ENCODE measurements at regions of chr1 and their contacts with region 1.

Region 1: DNA sequence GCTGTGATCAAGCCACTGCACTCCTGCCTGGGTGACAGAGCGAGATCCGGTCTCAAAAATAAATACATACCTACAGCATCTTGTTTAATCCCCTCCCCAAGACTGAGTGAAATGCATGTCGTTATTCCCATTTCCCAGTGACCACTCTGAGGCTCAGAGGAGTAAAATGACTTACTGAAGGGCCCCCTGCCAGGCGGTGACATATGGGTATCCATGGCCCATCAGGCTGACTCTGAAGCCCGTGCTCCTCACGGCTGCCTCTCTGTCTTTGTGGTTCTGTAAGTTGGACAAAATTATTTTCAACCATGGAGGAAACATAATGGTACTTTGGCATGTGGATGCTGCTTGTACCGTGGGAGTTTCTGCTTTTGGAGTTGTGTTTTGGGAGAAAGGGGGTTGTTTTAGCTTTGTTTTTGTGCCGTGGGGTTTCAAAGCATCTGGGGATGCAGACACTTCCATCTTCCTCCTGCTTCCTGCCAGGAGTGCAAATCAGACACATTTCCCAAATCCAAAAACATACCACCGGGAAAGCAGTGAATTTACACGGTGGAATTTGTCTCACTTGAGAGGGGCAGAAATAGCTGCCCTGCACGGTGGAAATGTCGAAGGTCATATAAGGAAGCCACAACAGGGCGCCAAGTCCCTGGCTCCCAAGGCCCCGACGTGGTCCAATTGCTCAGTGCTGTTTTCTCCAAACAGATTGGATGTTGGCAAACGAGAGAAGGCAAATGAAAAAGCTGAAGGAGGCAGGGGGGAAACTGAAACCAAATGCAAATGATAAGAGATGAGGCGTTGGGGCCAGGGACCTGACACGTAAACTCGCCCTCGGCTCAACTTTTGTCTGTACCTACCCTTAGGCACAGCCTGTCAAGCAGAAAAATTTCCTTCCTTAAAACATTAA is 17.1 kb upstream of the PINK1 start:
- DNase-seq: no peak
- H3K4me3 ChIP-seq: 0 out of 2 replicates have a peak overlapping the region, but pooled peaks have one; percentile 13
- H3K27ac ChIP-seq: peak overlapping the region; percentile 47
- H3K27me3 ChIP-seq: no peaks in the 10 kb centered on the region
- CTCF ChIP-seq: no peak

Region 2: GRCh38 chr1:20440785-20441200 is 175.4 kb before region 1 on chr1:
- CTCF ChIA-PET with region 1: no interaction called
- POLR2A ChIA-PET with region 1: no interaction called
- DNase-seq: no peak
- H3K4me3 ChIP-seq: no peak overlapping the region
- H3K27ac ChIP-seq: no peak overlapping the region
- H3K27me3 ChIP-seq: peaks cover 22% of the 10 kb centered on the region
- CTCF ChIP-seq: no peak

Region 3: GRCh38 chr1:20589331-20590278 is 26.6 kb before region 1 on chr1:
- CTCF ChIA-PET with region 1: no interaction called
- POLR2A ChIA-PET with region 1: interaction called, 13 read pairs
- DNase-seq: peak; percentile 78
- H3K4me3 ChIP-seq: peak overlapping the region; percentile 43
- H3K27ac ChIP-seq: peak overlapping the region; percentile 85
- H3K27me3 ChIP-seq: no peaks in the 10 kb centered on the region
- CTCF ChIP-seq: no peak

Region 4: DNA sequence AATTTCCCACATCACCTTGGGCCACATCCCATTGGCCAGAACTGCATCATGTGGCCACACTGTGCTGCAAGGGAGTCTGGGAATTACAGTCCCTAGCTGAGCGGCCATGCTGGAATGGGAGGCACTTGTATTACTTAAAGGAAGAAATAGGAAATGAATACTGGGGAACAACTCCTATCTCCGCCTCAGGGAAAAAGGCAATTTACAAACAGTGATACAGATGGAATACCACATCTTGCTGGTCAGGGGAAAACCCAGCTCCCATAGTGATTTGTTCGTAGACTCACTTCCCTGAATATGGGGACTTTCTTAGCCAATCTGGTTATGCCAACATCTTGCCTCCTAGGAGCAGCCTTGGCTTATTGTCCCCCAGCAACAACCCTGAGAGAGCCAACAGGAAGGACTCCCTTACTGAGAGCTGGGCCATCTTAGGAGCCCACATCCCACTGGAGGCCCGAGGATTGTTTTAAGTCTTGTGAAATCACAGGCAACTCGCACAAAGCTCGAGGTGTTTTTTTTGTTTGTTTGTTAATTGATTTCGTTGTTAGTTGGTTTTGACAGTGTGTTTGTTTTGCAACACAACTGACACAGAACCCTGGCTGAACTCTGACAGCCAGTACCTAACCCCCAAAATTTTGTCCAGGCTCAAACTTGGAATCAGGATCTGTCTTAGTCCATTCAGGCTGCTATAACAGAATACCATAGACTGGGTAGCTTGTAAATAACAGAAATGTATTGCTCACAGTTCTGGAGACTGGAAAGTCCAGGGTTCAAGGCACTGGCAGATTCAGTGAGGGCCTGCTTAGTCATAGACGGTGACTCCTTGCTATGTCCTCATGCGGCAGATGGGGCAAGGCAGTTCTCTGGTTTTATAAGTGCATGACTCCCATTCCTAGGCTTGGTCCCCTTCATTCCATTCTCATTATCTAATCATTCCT is 12.4 kb before region 1 on chr1:
- CTCF ChIA-PET with region 1: no interaction called
- POLR2A ChIA-PET with region 1: no interaction called
- DNase-seq: peak; percentile 65
- H3K4me3 ChIP-seq: no peak overlapping the region
- H3K27ac ChIP-seq: peak overlapping the region; percentile 62
- H3K27me3 ChIP-seq: no peaks in the 10 kb centered on the region
- CTCF ChIP-seq: no peak

Measured in AG04450 (cell line).